ENCODE measurements at regions of chr12 and their contacts with region 1.

Region 1: GRCh38 chr12:100142851-100143559 is at the start of gene BLTP3B:
- DNase-seq: peak; percentile 96
- H3K4me3 Mint-ChIP-seq: peak within 1 kb of the TSS; percentile 93
- H3K27ac Mint-ChIP-seq: peak within 1 kb of the TSS; percentile 99
- H3K4me1 Mint-ChIP-seq: peaks cover 39% of the 10 kb centered on the region
- H3K27me3 Mint-ChIP-seq: no peaks in the 10 kb centered on the region
- total RNA-seq, gene BLTP3B: 57.6 and 63.6 TPM in 2 replicates

Region 2: GRCh38 chr12:99558109-99558508 is 584.9 kb before region 1 on chr12:
- intact Hi-C with region 1: no loop called
- DNase-seq: no peak
- H3K4me3 Mint-ChIP-seq: no peak overlapping the region
- H3K27ac Mint-ChIP-seq: no peak overlapping the region
- H3K4me1 Mint-ChIP-seq: no peaks in the 10 kb centered on the region
- H3K27me3 Mint-ChIP-seq: no peaks in the 10 kb centered on the region

Region 3: DNA sequence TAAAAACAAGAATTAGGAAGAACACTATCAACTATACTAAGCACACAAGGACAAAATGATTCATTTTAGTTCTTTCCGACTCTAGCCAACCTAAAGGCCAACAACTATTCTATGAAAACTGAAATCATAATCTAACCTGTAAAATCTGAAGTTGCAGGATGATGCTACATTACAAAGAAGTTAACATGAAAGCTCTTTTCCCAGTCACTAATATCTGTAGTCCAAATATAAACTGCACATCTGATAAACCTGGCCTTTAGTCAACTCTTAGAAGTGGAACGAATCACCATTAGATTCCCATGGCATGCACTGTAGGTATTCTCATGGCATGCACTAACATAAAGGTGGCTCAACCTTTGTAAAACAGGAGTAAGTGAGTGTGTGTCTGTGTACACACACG is 42.0 kb before region 1 on chr12:
- intact Hi-C with region 1: loop called (anchors 5 kb)
- DNase-seq: no peak
- H3K4me3 Mint-ChIP-seq: no peak overlapping the region
- H3K27ac Mint-ChIP-seq: peak overlapping the region; percentile 12
- H3K4me1 Mint-ChIP-seq: peaks cover 5% of the 10 kb centered on the region
- H3K27me3 Mint-ChIP-seq: no peaks in the 10 kb centered on the region

Region 4: DNA sequence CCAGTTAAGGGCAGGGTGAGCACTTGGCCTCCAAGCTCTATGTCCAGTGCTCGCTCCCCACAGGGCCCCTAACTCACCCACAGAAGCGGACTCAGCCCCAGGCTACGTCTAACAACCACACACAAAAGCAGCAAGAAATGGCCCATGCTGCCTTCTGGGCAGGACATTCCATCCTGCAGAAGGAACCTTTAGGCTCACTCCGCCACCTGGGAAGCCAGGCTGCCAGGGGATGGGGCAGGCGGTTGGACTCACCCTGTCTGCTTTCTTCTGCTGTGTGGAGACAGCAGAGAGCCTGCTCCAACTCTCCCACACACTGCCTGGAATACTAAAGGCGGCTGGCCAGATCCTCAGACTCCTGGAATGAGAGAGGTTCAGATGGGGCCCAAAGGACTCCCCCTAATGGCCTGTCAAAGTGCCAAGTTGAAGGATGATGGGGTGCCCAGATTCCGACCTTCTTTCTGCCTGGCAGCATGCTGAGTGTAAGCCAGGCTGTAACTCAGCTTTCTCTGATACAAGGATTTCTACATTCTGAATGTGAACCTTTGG is 27.4 kb after region 1 on chr12:
- intact Hi-C with region 1: no loop called
- DNase-seq: no peak
- H3K4me3 Mint-ChIP-seq: no peak overlapping the region
- H3K27ac Mint-ChIP-seq: no peak overlapping the region
- H3K4me1 Mint-ChIP-seq: no peaks in the 10 kb centered on the region
- H3K27me3 Mint-ChIP-seq: no peaks in the 10 kb centered on the region

Region 5: DNA sequence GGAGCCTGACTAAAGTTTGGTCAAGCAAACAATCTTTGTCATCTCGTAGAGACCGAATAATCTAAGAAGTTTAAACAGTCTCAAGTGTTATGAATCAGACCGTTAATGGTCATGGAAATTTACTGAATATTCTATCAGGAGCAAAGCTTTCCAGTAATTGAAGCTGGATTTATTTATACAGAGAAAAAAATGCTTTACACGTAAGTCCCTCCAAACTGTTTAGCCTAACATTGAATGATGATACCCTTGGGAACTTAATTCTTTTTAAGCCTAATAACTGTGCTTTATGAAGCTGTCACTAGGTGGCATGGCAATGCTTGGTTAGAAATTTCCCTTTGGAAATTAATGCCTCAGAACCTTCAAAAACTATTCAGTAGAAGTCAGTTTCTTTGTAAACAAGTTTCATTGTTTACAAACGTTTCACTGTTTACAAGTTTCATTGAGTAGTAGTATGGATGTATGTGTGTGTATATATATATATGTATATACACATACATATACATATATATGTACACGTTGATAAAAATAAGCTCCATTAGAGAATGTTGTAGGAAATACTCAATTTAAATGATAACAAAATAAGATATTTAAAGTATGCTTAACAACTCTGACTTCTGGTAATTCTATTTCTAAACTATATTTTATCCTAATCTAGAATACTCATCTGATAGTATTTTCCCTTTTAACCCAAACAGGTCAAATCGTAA is 91.7 kb after region 1 on chr12:
- intact Hi-C with region 1: no loop called
- DNase-seq: peak; percentile 67
- H3K4me3 Mint-ChIP-seq: no peak overlapping the region
- H3K27ac Mint-ChIP-seq: no peak overlapping the region
- H3K4me1 Mint-ChIP-seq: no peaks in the 10 kb centered on the region
- H3K27me3 Mint-ChIP-seq: no peaks in the 10 kb centered on the region

Region 6: DNA sequence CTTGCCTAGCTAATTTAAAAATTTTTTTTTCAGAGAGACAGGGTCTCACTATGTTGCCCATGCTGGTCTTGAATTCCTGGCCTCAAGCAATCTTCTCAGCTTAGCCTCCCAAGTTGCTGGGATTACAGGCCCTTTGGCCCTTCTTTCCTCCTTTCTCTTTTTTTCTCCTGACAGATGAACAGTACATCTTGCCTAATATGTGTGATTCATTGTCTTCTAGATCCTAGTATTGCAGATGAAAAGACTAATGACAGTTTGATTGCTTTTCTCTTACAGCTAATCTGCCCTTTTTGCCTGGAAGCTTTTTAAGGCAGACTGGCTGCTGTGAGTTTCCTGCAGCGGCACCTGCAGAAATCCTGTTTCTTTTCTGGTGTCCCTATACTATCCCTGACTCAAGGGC is 111.9 kb after region 1 on chr12:
- intact Hi-C with region 1: no loop called
- DNase-seq: no peak
- H3K4me3 Mint-ChIP-seq: no peak overlapping the region
- H3K27ac Mint-ChIP-seq: no peak overlapping the region
- H3K4me1 Mint-ChIP-seq: peaks cover 10% of the 10 kb centered on the region
- H3K27me3 Mint-ChIP-seq: no peaks in the 10 kb centered on the region

Region 7: DNA sequence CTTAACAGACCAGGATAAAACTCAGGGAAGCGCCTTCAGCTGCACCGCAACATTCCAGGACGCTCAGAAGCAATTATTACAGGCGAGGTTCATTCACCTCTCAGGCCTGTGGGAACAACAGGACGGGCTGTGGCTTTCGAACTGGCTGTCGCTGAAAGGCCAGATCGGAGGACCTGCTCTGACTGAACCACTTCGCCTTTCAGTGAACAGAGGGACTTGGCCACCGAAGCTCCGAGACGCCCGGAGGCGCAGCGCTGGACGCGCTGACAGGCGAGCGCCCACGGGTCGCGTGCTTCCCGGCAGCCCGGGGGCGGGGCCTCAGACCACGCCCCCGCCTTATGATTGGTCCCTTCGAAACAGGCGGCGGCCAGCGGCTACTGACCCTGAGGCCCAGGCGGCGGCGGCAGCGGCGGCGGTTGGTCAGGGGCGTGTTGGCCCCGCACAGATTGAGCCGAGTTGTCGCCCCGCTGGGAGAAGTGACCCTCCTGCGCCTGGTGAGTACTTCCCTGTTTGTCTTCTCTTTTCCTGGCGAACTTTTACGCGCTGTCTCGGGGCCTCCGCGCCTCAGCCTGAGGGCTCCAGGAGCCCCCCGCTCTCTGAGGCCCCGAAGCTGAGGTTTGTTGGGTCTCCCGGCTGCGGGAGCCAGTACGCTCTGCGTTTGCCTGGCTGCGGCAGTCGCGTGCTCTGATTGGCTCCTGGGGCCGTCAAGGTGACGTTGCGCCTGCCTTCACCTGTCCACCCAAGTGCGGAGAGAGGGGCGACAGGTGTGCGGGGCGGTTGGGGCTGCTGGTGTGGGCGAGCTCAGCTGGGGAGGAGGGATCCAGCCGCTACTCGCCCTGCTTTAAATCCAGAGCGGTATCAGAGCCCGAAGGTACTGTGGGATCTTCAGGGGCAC is 430.5 kb after region 1 on chr12 and contains the start of gene GAS2L3:
- intact Hi-C with region 1: loop called (anchors 5 kb)
- DNase-seq: peak; percentile 93
- H3K4me3 Mint-ChIP-seq: peak within 1 kb of the TSS; percentile 90
- H3K27ac Mint-ChIP-seq: peak within 1 kb of the TSS; percentile 81
- H3K4me1 Mint-ChIP-seq: peaks cover 10% of the 10 kb centered on the region
- H3K27me3 Mint-ChIP-seq: peaks cover 34% of the 10 kb centered on the region
- total RNA-seq, gene GAS2L3: 1.6 and 1.7 TPM in 2 replicates